ENCODE measurements at regions of chr13 and their contacts with region 1.

Region 1: GRCh38 chr13:75694722-75695121 is 58.6 kb downstream of the LMO7 start:
- DNase-seq: no peak
- H3K4me3 ChIP-seq: no peak overlapping the region
- H3K27ac ChIP-seq: peak overlapping the region in 1 of 2 experiments; percentile 30; a peak in 1 of 4 replicates
- H3K4me1 ChIP-seq: peaks cover 9 to 10% of the 10 kb centered on the region in 2 experiments; a peak in 3 of 4 replicates
- H3K27me3 ChIP-seq: no peaks in the 10 kb centered on the region
- CTCF ChIP-seq: no peak
- EP300 ChIP-seq: no peak
- RAD21 ChIP-seq: no peak

Region 2: DNA sequence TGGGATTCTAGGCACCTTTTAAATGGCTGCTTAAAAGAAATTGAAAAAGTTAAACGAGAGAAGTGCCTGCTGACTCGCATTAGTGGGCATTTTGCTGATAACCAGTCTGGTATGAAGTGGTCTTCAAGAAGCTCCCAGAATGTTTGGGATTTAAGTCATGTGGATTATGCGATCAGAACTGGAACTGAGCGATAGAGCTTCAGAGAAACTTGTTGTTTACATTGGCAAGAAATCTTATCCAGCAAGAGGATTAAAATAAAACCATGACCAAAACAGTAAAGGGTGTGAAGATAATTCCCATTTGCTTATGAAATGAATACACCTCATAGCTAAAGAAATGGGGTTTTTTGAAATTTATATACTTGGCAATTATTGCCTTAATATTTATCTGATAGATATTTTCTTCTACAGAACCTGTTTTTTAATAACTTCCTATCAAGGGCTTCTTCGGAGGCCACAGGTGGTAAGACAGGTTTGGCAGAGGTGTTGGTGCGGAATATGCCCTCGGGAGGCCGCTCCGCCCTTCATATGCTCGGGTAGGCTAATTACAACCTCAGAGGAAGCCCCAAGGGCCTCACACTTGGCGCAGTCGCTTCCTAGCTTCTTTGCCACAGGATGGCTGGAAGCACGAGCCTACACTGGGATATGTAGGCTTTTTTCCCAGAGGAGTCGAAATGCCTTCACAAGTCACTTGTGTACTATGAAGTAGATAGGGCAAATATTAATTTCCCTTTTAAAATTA is 10.0 kb after region 1 on chr13:
- CTCF ChIA-PET with region 1: interaction called, 21 read pairs
- POLR2A ChIA-PET with region 1: no interaction called
- DNase-seq: no peak
- H3K4me3 ChIP-seq: no peak overlapping the region
- H3K27ac ChIP-seq: peak overlapping the region in 1 of 2 experiments; percentile 60; a peak in 2 of 4 replicates
- H3K4me1 ChIP-seq: peaks cover 0 to 20% of the 10 kb centered on the region in 2 experiments; a peak in 2 of 4 replicates
- H3K27me3 ChIP-seq: no peaks in the 10 kb centered on the region
- CTCF ChIP-seq: no peak
- EP300 ChIP-seq: no peak
- RAD21 ChIP-seq: no peak

Region 3: DNA sequence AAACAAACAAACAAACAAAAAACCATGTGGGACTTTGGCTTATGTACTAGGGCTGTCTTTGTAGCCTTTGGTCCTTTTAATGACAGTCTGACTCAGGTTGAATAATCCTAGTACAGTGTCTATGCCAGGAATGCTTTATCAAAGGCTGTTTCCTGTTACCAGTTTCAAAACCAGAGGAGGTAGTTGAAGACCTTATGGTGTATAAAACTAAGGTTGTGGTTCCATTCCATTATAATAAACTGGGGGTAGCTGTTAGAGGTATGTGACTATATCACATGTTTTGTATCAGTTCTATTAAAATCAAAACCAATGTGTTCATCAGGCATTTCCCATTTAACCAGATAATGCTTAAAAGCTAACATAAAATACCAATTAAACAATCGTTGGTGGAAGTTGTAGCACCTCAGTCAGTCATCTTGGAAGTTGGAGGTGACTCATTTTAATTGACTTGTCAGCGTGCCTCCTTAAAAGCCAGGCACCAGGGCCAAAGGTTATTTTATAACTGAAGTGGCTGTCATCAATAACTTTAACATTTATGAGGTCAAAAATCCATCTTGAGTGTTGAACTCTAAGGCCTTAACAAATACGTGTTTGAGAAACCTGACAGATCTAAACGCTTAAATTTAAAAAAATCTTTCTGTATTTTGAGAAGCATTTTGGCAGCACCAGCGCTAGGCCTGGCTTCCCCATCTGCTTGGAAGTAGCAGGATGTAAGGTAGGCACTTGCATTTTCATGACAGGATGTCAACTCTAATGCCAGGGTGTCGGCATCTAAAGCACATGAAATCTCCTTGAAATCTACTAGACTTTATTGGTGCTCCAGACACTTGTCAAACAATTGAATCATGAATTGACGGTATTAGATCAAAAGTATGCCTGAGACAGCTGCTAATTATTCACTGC is 103.9 kb after region 1 on chr13:
- CTCF ChIA-PET with region 1: interaction called, 34 read pairs
- POLR2A ChIA-PET with region 1: no interaction called
- DNase-seq: no peak
- H3K4me3 ChIP-seq: no peak overlapping the region
- H3K27ac ChIP-seq: peak overlapping the region in 1 of 2 experiments; percentile 34; a peak in 2 of 4 replicates
- H3K4me1 ChIP-seq: peaks cover 0 to 36% of the 10 kb centered on the region in 2 experiments; a peak in 3 of 4 replicates
- H3K27me3 ChIP-seq: no peaks in the 10 kb centered on the region
- CTCF ChIP-seq: no peak
- EP300 ChIP-seq: no peak
- RAD21 ChIP-seq: no peak

Region 4: DNA sequence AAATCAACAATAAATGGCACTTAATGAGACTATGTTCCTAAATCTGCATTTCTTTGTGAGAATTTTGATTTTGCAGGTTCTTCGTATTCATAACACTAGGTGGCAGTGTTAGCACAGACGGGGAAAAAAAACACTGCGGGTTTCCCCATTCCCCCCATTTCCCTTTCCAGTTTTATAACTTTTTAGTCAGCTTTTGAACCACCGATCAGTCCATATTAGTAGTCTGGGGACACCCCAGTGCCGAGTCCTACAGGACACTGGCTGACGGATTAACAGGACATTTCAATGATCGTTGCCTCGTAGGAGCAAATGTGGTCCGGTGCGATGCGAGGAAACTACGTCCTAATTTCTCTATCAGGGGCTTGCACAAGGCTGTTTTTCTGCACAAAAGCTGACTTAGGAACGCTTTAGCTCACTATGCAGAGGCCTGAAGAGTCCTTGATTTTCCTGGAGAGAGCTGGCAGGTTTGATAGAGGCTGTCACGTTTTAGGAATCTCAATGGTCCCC is 175.7 kb after region 1 on chr13:
- CTCF ChIA-PET with region 1: interaction called, 73 read pairs
- POLR2A ChIA-PET with region 1: no interaction called
- DNase-seq: peak; percentile 46
- H3K4me3 ChIP-seq: peak overlapping the region; percentile 38 to 48
- H3K27ac ChIP-seq: no peak overlapping the region
- H3K4me1 ChIP-seq: 0 out of 4 replicates have a peak, but pooled peaks cover 0 to 3% of the 10 kb centered on the region in 2 experiments
- H3K27me3 ChIP-seq: no peaks in the 10 kb centered on the region
- CTCF ChIP-seq: peak; percentile 85
- EP300 ChIP-seq: no peak
- RAD21 ChIP-seq: peak; percentile 73

Region 5: DNA sequence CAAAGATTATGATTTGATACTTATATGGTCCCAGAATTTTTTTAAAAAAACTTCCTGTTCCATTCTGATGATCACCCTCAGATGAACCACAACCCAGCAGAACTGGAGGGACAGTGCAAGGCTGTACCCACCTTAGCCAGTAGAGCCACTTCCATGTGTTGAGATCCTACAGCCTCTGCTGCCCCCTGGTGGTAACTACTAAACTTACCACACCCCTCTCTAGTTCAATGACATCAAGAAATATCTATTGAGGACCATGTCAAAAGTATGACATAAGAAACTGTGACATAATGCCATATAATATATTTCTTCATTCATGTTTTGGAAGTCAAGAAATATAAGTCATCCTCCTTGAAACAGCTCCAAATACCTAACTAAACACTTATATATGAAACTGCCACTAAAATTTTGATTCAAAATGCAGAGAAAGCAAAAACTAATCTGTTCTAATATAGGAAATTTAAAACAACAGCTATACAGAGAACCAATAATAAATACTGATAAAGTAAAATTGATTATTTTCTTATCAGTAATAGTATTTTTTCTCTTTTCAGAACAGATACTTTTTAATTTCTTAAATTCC is 778.9 kb after region 1 on chr13:
- CTCF ChIA-PET with region 1: interaction called, 15 read pairs
- POLR2A ChIA-PET with region 1: no interaction called
- DNase-seq: peak; percentile 53
- H3K4me3 ChIP-seq: no peak overlapping the region; a peak in 1 of 4 replicates
- H3K27ac ChIP-seq: no peak overlapping the region
- H3K4me1 ChIP-seq: no peaks in the 10 kb centered on the region
- H3K27me3 ChIP-seq: peaks cover 10% of the 10 kb centered on the region; the same call in 1 of the 2 replicates
- CTCF ChIP-seq: peak; percentile 87
- EP300 ChIP-seq: no peak
- RAD21 ChIP-seq: peak; percentile 89

Measured in SK-N-SH (cell line).